GM10248 (cell line): ENCODE measurements at regions of chr17 and their contacts with region 1.

Region 1: DNA sequence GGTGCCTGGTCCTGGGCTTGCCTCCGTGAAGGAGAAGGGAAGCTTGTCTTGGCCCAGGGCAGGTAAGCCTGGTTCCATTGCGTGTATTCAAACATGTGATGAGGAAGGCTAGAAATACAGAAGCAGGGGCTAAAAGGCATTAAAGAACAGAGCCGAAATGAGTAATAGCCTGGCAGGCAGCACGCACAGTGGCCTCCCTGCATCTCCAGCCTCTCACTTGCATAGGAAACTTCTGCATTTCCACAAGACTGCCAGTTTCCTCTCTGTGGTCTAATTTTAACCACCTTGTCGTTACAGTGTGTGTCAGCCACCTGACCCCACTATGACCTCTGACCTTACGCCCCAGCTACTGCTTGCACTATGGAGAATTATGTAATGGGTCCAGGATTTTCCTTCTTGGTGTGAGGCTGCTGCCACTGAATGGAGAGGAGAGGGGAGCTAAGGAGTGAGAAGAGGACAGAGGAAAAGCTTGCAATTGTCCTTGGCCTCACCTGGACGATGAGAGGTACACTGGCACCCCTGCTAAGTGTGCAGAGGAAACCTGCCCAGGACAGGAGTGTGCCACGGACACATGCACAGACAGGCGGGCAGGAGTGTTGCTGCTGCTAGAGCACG is 32.8 kb downstream of the HIC1 start:
- DNase-seq: peak; percentile 68
- CTCF ChIP-seq: no peak

Region 2: GRCh38 chr17:1989135-1989534 is 98.6 kb before region 1 on chr17:
- CTCF ChIA-PET with region 1: no interaction called
- POLR2A ChIA-PET with region 1: no interaction called
- DNase-seq: no peak
- CTCF ChIP-seq: no peak

Region 3: GRCh38 chr17:2070241-2071023 is 17.3 kb before region 1 on chr17:
- CTCF ChIA-PET with region 1: interaction called, 99 read pairs
- POLR2A ChIA-PET with region 1: interaction called, 6 read pairs
- DNase-seq: peak; percentile 84
- CTCF ChIP-seq: no peak

Region 4: GRCh38 chr17:2259769-2260536 is 172.2 kb after region 1 on chr17:
- CTCF ChIA-PET with region 1: interaction called, 15 read pairs
- POLR2A ChIA-PET with region 1: interaction called, 4 read pairs
- DNase-seq: peak; percentile 73
- CTCF ChIP-seq: no peak